Heart right ventricle (tissue), 16 donors: ENCODE measurements at regions of chr14 and their contacts with region 1.

Region 1: GRCh38 chr14:102046343-102047278 is 40.2 kb downstream of the HSP90AA1 start:
- DNase-seq: peak; percentile 81 to 86
- ATAC-seq: peak; percentile 86 to 94 (median 91)
- H3K4me3 ChIP-seq: no peak overlapping the region
- H3K27ac ChIP-seq: peak overlapping the region in 5 of 10 donors; percentile 19 to 58 (median 39)
- H3K4me1 ChIP-seq: peaks cover 0 to 41% (median 27%) of the 10 kb centered on the region in 9 donors
- H3K27me3 ChIP-seq: no peaks in the 10 kb centered on the region
- CTCF ChIP-seq: peak; percentile 28 to 74 (median 50)

Region 2: GRCh38 chr14:101707068-101707842 is 339.4 kb before region 1 on chr14:
- intact Hi-C with region 1: loop called in 2 of 10 experiments (anchors 5 kb)
- DNase-seq: peak in 1 of 2 donors; percentile 79
- ATAC-seq: peak; percentile 38 to 83 (median 64)
- H3K4me3 ChIP-seq: peak overlapping the region in 2 of 10 donors; percentile 1 to 25
- H3K27ac ChIP-seq: peak overlapping the region in 9 of 10 donors; percentile 71 to 90 (median 84)
- H3K4me1 ChIP-seq: peaks cover 10 to 33% (median 25%) of the 10 kb centered on the region in 9 donors
- H3K27me3 ChIP-seq: peaks cover 0 to 29% (median 5%) of the 10 kb centered on the region in 7 donors
- CTCF ChIP-seq: peak; percentile 72 to 90 (median 84)

Region 3: DNA sequence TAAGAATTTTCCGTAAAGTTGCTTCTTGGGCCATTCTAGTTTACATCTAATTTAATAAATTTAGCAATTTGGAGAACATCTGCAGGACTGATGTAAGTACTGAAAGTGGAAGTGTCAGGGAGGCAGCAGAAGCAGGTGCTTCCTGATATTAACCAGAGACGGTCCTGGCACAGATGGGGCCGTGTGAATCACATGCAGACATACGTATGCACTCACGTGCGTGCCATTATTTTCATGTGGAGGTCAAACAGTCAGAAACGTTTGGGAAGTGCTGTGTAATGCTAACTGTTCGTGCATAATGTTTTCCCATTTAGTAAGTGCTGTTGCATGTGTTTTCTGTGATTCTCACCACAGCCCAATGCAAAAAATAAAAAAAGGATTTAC is 170.1 kb before region 1 on chr14:
- intact Hi-C with region 1: no loop called
- DNase-seq: peak; percentile 63 to 87
- ATAC-seq: peak; percentile 75 to 94 (median 88)
- H3K4me3 ChIP-seq: peak overlapping the region in 1 of 10 donors; percentile 11
- H3K27ac ChIP-seq: peak overlapping the region in 9 of 10 donors; percentile 78 to 89 (median 83)
- H3K4me1 ChIP-seq: peaks cover 0 to 75% (median 58%) of the 10 kb centered on the region in 9 donors
- H3K27me3 ChIP-seq: no peaks in the 10 kb centered on the region
- CTCF ChIP-seq: no peak

Region 4: GRCh38 chr14:101992708-101993107 is 53.9 kb before region 1 on chr14:
- intact Hi-C with region 1: loop called in 2 of 10 experiments (anchors 5 kb)
- DNase-seq: no peak
- ATAC-seq: peak in 7 of 8 donors; percentile 29 to 86 (median 73)
- H3K4me3 ChIP-seq: no peak overlapping the region
- H3K27ac ChIP-seq: no peak overlapping the region
- H3K4me1 ChIP-seq: peaks cover 0 to 7% (median 0%) of the 10 kb centered on the region in 9 donors
- H3K27me3 ChIP-seq: no peaks in the 10 kb centered on the region
- CTCF ChIP-seq: no peak

Region 5: DNA sequence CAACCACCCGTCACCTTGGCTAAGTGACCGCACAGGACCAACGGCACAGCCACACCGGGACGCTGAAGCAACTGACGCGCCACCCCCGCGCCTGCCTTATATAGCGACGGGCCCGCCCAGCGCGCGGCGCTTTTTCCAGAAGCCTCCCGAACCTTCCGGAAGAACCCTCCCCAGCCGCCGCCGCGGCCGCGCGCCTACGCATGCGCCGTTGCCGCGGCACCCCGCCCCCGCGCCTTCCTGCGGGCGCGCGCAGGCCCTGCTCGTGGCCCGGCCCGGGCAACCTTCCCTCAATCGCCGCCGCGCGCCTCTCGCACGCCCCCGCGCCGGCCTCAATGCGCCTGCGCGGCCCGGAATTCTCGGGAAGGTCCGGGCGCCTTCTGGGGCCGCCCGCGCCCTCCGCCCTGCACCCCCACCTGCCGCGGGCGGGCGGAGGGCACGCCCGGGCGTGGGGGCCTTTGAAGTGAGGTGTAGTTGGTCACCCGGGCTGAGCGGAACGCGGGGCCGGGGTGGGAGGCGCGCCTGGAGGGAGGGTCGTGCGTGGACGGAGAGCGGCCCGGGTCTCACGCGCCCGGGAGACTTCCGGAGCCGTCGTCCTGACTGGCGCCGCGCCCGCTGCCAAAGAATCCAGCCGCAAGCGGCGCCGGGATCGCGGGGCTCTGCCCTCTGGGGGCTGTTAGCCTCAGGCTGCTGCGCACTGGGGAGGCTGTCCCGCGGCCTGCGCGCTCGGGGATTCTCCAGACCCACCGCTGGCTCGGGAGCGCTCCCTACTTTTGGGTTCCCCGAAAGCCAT is 40.6 kb after region 1 on chr14 and contains the start of gene HSP90AA1:
- intact Hi-C with region 1: loop called in 4 of 10 experiments (anchors 5 to 10 kb)
- DNase-seq: peak; percentile 95
- ATAC-seq: peak; percentile 83 to 95 (median 91)
- H3K4me3 ChIP-seq: peak within 1 kb of the TSS; percentile 72 to 99 (median 86)
- H3K27ac ChIP-seq: peak within 1 kb of the TSS; percentile 99 to 100 (median 100)
- H3K4me1 ChIP-seq: peaks cover 5 to 55% (median 50%) of the 10 kb centered on the region in 9 donors
- H3K27me3 ChIP-seq: no peaks in the 10 kb centered on the region
- CTCF ChIP-seq: peak in 6 of 9 donors; percentile 12 to 49 (median 34)
- total RNA-seq, gene HSP90AA1: 315 to 501 (median 402) TPM

Region 6: GRCh38 chr14:102096214-102097114 is 49.9 kb after region 1 on chr14:
- intact Hi-C with region 1: loop called in 5 of 10 experiments (anchors 5 to 10 kb)
- DNase-seq: peak; percentile 83 to 87
- ATAC-seq: peak; percentile 68 to 95 (median 90)
- H3K4me3 ChIP-seq: no peak overlapping the region
- H3K27ac ChIP-seq: no peak overlapping the region
- H3K4me1 ChIP-seq: peaks cover 0 to 10% (median 4%) of the 10 kb centered on the region in 9 donors
- H3K27me3 ChIP-seq: no peaks in the 10 kb centered on the region
- CTCF ChIP-seq: peak; percentile 75 to 90 (median 88)

Region 7: DNA sequence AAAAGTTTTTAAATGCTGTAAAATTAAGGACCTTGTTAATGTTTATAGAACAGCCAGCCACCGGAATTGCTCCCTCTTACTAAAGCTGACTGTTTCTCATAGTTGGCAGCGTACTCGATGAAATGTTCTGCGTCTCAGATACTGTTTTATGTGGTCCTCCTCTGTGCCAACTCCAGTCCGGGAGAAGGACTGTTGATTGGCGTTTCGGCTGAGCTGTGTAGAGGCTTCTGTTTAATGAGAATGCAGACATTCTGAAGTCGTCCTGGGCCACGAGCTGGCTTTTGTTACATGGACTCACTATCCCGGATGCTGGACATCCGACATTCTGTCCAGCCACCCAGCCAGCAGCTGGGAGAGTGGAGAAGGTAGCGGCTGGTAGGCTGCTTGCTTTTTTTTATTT is 168.5 kb after region 1 on chr14:
- intact Hi-C with region 1: loop called in 2 of 10 experiments (anchors 10 kb)
- DNase-seq: no peak
- ATAC-seq: peak in 7 of 8 donors; percentile 56 to 82 (median 72)
- H3K4me3 ChIP-seq: peak overlapping the region in 2 of 10 donors; percentile 9 to 10
- H3K27ac ChIP-seq: peak overlapping the region in 9 of 10 donors; percentile 41 to 80 (median 60)
- H3K4me1 ChIP-seq: peaks cover 0 to 46% (median 28%) of the 10 kb centered on the region in 9 donors
- H3K27me3 ChIP-seq: no peaks in the 10 kb centered on the region
- CTCF ChIP-seq: no peak